Caco-2 (cell line): ENCODE measurements at regions of chr3 and their contacts with region 1.

Region 1: DNA sequence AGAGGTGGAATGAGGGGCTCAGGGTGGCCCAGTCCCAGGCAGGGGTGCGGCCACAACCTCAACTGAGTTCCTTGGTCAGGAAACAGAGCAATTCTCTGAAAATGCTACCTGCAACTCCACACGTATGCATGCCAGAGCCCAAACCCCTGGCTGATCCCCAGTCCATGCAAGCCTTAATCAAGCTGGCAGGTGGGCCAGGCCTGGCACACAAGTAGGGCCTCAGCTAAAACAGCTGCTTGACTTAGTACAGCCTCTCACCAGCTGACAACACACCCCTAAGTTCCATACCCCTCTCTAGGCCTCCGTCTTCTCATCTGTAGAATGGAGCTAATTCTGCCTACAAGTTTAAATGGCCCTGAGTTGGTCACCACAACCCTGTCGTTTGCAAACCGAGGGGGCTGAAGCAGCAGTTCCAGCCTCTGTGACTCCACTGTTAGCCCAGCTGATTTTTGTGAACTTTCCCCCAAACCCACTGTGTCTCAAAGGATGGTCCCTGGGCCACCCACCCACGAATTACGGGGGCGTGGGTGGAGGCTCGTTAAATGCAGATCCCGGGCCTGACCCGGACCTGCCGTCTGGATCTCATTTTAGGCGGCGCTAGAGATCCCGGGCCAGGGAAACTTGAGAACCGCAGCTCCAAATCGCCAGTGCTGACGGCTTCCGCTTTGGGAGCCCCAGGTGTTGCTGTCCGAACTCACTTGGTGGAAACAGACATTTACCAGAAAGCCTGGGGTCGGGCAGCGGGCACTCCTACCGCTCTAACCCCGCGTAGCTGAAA is 927 bp downstream of the CHDH start:
- DNase-seq: peak; percentile 63 to 66
- H3K4me3 ChIP-seq: peak overlapping the region; percentile 81
- H3K4me3 Mint-ChIP-seq: peak overlapping the region; percentile 89
- H3K27ac Mint-ChIP-seq: peak overlapping the region; percentile 93
- H3K4me1 ChIP-seq: peaks cover 32% of the 10 kb centered on the region
- H3K4me1 Mint-ChIP-seq: peaks cover 18% of the 10 kb centered on the region
- H3K27me3 ChIP-seq: no peaks in the 10 kb centered on the region
- H3K27me3 Mint-ChIP-seq: no peaks in the 10 kb centered on the region
- CTCF ChIP-seq: peak; percentile 25 to 45

Region 2: GRCh38 chr3:53729618-53730017 is 115.7 kb before region 1 on chr3:
- CTCF ChIA-PET with region 1: no interaction called
- POLR2A ChIA-PET with region 1: no interaction called
- intact Hi-C with region 1: loop called (anchors 10 kb)
- DNase-seq: peak in 1 of 2 experiments; percentile 20
- H3K4me3 ChIP-seq: no peak overlapping the region
- H3K4me3 Mint-ChIP-seq: no peak overlapping the region
- H3K27ac Mint-ChIP-seq: no peak overlapping the region
- H3K4me1 ChIP-seq: no peaks in the 10 kb centered on the region
- H3K4me1 Mint-ChIP-seq: no peaks in the 10 kb centered on the region
- H3K27me3 ChIP-seq: no peaks in the 10 kb centered on the region
- H3K27me3 Mint-ChIP-seq: no peaks in the 10 kb centered on the region
- CTCF ChIP-seq: peak in 1 of 2 experiments; percentile 37

Region 3: DNA sequence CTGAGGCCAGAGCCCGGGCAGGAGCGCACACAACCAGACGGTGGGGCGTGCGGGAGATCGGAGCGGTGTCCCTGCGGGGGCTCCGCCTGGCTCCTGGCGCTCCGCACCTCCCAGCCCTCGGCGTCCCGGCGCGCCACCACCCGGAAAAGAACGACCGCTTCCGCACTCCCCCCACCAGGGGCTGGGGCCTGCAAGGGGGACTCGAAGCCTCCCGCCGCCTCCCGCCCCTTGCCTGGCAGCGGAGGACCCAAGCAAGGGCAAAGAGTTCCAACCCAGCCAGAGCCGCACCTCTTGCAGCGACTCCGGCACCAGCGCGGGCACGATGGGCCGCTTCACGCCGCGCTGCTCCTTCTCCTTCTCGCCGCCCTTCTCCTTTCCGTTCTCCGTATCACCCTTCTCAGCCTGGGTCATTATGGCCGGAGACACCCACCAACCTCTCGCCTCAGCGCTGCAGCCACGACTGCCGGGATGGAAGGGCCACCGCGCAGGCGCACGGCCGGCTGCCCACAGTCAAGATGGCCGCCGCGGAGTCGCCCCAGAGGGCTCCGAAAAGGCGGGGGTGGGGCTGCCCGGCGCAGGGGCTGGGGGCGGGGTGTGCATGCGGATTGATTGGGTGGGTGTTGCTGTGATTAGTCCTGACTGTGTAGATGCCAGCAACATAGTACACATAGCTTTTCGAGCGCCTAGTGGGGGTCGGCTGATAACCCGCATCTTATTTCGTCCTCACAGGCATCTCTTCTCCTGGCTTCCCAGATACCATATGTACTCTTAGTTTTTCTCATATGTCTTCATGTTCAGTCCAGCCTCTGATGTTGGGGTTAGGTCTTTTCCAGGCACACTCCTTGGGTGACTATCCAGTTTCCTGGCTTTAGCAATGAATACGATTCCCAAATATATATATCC is 36.6 kb after region 1 on chr3 and contains the start of gene ACTR8:
- CTCF ChIA-PET with region 1: no interaction called
- POLR2A ChIA-PET with region 1: no interaction called
- intact Hi-C with region 1: loop called (anchors 2 kb)
- DNase-seq: peak; percentile 89 to 92
- H3K4me3 ChIP-seq: peak within 1 kb of the TSS; percentile 81
- H3K4me3 Mint-ChIP-seq: peak within 1 kb of the TSS; percentile 93
- H3K27ac Mint-ChIP-seq: peak within 1 kb of the TSS; percentile 96
- H3K4me1 ChIP-seq: peaks cover 13% of the 10 kb centered on the region
- H3K4me1 Mint-ChIP-seq: peaks cover 21% of the 10 kb centered on the region
- H3K27me3 ChIP-seq: no peaks in the 10 kb centered on the region
- H3K27me3 Mint-ChIP-seq: no peaks in the 10 kb centered on the region
- CTCF ChIP-seq: peak in 1 of 2 experiments; percentile 38
- total RNA-seq, gene ACTR8: 34.4 and 35.2 TPM in 2 replicates

Region 4: DNA sequence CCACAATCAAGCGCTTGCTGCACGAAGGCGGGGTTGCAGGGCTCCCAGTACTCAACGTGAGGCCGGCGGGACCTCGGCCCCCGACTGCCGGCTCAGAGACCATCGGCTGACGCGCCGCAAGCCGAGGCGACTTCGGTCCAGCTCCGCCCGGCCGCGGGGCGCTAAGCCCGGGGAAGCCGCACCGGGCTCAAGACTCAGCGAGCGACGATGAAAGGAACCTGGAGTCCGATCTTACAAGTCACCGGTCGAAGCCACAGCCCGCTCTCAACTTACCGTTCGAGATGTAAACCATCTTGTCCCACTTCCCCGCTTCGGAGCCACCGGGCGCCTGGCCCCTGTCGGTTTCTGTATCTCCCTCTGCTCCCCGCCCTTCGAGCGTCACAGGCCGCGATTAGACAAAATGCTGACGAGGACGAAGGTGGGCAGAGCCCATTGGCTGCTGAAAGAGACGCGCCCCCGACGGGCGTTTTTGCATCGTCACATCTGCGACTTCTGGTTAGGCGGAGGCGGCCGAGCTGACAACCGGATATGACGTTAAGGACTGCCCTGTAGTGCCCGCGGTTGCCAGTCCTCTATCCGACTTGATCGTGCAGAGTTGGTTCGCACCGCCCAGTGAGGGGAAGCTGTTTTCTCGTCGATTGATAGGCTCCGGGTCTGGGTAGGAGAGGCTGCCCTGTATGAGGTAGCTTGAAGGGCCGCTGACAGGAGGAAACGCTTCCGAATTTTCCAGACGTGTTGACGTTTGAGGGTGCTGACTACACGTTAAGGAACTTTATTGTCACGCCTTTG is 46.4 kb after region 1 on chr3 and contains the start of gene SELENOK:
- CTCF ChIA-PET with region 1: interaction called, 3 read pairs
- POLR2A ChIA-PET with region 1: interaction called, 14 read pairs
- intact Hi-C with region 1: loop called (anchors 5 kb)
- DNase-seq: peak; percentile 96 to 98
- H3K4me3 ChIP-seq: peak within 1 kb of the TSS; percentile 94
- H3K4me3 Mint-ChIP-seq: peak within 1 kb of the TSS; percentile 96
- H3K27ac Mint-ChIP-seq: peak within 1 kb of the TSS; percentile 99
- H3K4me1 ChIP-seq: peaks cover 7% of the 10 kb centered on the region; the same call in 1 of the 2 replicates
- H3K4me1 Mint-ChIP-seq: peaks cover 16% of the 10 kb centered on the region
- H3K27me3 ChIP-seq: no peaks in the 10 kb centered on the region
- H3K27me3 Mint-ChIP-seq: no peaks in the 10 kb centered on the region
- CTCF ChIP-seq: no peak
- total RNA-seq, gene SELENOK: 51.5 and 56.6 TPM in 2 replicates

Region 5: GRCh38 chr3:53970661-53971060 is 125.4 kb after region 1 on chr3:
- CTCF ChIA-PET with region 1: no interaction called
- POLR2A ChIA-PET with region 1: no interaction called
- intact Hi-C with region 1: no loop called
- DNase-seq: peak in 1 of 2 experiments; percentile 15
- H3K4me3 ChIP-seq: no peak overlapping the region
- H3K4me3 Mint-ChIP-seq: no peak overlapping the region
- H3K27ac Mint-ChIP-seq: no peak overlapping the region
- H3K4me1 ChIP-seq: no peaks in the 10 kb centered on the region
- H3K4me1 Mint-ChIP-seq: no peaks in the 10 kb centered on the region
- H3K27me3 ChIP-seq: no peaks in the 10 kb centered on the region
- H3K27me3 Mint-ChIP-seq: no peaks in the 10 kb centered on the region
- CTCF ChIP-seq: no peak

Region 6: GRCh38 chr3:54008104-54008503 is 162.8 kb after region 1 on chr3:
- CTCF ChIA-PET with region 1: no interaction called
- POLR2A ChIA-PET with region 1: no interaction called
- intact Hi-C with region 1: no loop called
- DNase-seq: no peak
- H3K4me3 ChIP-seq: no peak overlapping the region
- H3K4me3 Mint-ChIP-seq: no peak overlapping the region
- H3K27ac Mint-ChIP-seq: no peak overlapping the region
- H3K4me1 ChIP-seq: no peaks in the 10 kb centered on the region
- H3K4me1 Mint-ChIP-seq: no peaks in the 10 kb centered on the region
- H3K27me3 ChIP-seq: no peaks in the 10 kb centered on the region
- H3K27me3 Mint-ChIP-seq: no peaks in the 10 kb centered on the region
- CTCF ChIP-seq: no peak